ENCODE measurements at regions of chr17 and their contacts with region 1.

Region 1: GRCh38 chr17:8057691-8058114 is 18.8 kb downstream of the ALOX15B start:
- DNase-seq: peak; percentile 52 to 76 (median 62)
- ATAC-seq: peak; percentile 90
- H3K4me3 ChIP-seq: no peak overlapping the region
- H3K27ac ChIP-seq: no peak overlapping the region
- H3K4me1 ChIP-seq: no peaks in the 10 kb centered on the region; a peak in 2 of 5 replicates
- H3K27me3 ChIP-seq: 0 out of 5 replicates have a peak, but pooled peaks cover 0 to 3% of the 10 kb centered on the region in 2 experiments
- CTCF ChIP-seq: peak; percentile 75 to 80 (median 78)
- EP300 ChIP-seq: no peak
- POLR2A ChIP-seq: no peak
- RAD21 ChIP-seq: peak; percentile 72 to 82

Region 2: GRCh38 chr17:7740481-7741001 is 317.2 kb before region 1 on chr17:
- CTCF ChIA-PET with region 1: interaction called, 12 read pairs
- POLR2A ChIA-PET with region 1: no interaction called
- in situ Hi-C with region 1: no loop called
- intact Hi-C with region 1: loop called (anchors 1 kb)
- DNase-seq: no peak
- ATAC-seq: no peak
- H3K4me3 ChIP-seq: no peak overlapping the region
- H3K27ac ChIP-seq: no peak overlapping the region
- H3K4me1 ChIP-seq: peaks cover 0 to 4% of the 10 kb centered on the region in 2 experiments; a peak in 3 of 5 replicates
- H3K27me3 ChIP-seq: peaks cover 18 to 48% of the 10 kb centered on the region in 2 experiments; a peak in 4 of 5 replicates
- CTCF ChIP-seq: no peak
- EP300 ChIP-seq: no peak
- POLR2A ChIP-seq: no peak
- RAD21 ChIP-seq: no peak

Region 3: GRCh38 chr17:7915611-7916382 is 141.9 kb before region 1 on chr17 and contains the start of gene RNF227:
- CTCF ChIA-PET with region 1: interaction called, 13 read pairs
- POLR2A ChIA-PET with region 1: interaction called, 4 read pairs
- in situ Hi-C with region 1: loop called (anchors 5 kb)
- intact Hi-C with region 1: loop called (anchors 2 kb)
- DNase-seq: peak; percentile 72 to 92 (median 74)
- ATAC-seq: peak; percentile 87
- H3K4me3 ChIP-seq: peak within 1 kb of the TSS; percentile 46
- H3K27ac ChIP-seq: peak within 1 kb of the TSS; percentile 88
- H3K4me1 ChIP-seq: peaks cover 18 to 24% of the 10 kb centered on the region in 2 experiments; a peak in 4 of 5 replicates
- H3K27me3 ChIP-seq: no peaks in the 10 kb centered on the region
- CTCF ChIP-seq: no peak
- EP300 ChIP-seq: no peak
- POLR2A ChIP-seq: peak; percentile 70
- RAD21 ChIP-seq: no peak
- polyA plus RNA-seq, gene RNF227: 1.1 to 1.5 TPM

Region 4: DNA sequence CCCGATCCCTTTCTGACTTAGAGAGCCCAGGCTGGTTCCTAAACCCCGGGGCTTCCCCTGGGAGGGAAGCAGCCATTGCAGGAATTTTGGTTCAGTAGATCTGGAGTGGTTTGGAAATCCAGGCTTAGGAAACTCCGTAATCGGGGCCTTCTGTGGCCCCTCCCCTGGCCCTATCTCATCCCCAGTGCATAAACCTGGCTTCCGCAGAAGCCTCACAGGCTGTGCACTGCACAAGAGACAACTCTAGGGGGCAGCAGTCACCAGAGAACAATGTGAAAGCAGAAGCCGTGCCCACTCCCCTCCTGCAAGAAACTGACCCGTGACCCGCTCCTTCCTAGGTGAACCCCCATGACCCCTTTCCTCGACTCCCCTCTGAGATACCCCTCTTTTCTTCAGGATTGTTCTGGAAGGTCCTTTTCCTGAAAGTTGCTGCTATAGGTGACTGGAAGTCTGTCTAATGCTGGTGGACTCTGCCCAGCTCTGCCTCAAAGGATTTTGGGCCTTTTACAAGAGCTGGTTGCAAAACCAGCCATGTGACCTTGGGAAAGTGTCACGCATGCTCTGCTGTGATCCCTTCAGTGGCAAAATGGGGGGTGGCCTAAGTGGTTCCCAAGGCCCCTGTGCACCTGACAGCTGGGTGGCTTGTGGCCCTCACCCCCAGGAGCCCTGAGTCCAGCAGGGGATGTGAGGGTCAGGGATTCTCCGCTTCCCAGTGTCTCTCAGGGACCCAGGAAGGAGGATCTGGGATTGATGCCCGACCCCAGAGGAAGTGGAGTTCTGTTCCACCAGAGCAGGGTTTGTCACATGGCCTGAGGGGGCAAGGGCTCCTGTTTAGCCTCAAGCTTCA is 40.8 kb before region 1 on chr17:
- CTCF ChIA-PET with region 1: interaction called, 17 read pairs
- POLR2A ChIA-PET with region 1: no interaction called
- in situ Hi-C with region 1: no loop called
- intact Hi-C with region 1: loop called (anchors 1 kb)
- DNase-seq: peak; percentile 53 to 60 (median 57)
- ATAC-seq: peak; percentile 95
- H3K4me3 ChIP-seq: no peak overlapping the region
- H3K27ac ChIP-seq: no peak overlapping the region
- H3K4me1 ChIP-seq: peaks cover 0 to 13% of the 10 kb centered on the region in 2 experiments; a peak in 2 of 5 replicates
- H3K27me3 ChIP-seq: peaks cover 9 to 71% of the 10 kb centered on the region in 2 experiments; a peak in 4 of 5 replicates
- CTCF ChIP-seq: peak; percentile 64 to 82 (median 72)
- EP300 ChIP-seq: no peak
- POLR2A ChIP-seq: no peak
- RAD21 ChIP-seq: peak; percentile 47 to 71

Region 5: GRCh38 chr17:8118769-8119580 is 61.3 kb after region 1 on chr17:
- CTCF ChIA-PET with region 1: interaction called, 5 read pairs
- POLR2A ChIA-PET with region 1: no interaction called
- in situ Hi-C with region 1: no loop called
- intact Hi-C with region 1: loop called (anchors 2 kb)
- DNase-seq: peak; percentile 73 to 85 (median 76)
- ATAC-seq: peak; percentile 81
- H3K4me3 ChIP-seq: peak overlapping the region; percentile 65
- H3K27ac ChIP-seq: peak overlapping the region; percentile 63; the same call in 2 of the 3 replicates
- H3K4me1 ChIP-seq: peaks cover 20 to 43% of the 10 kb centered on the region in 2 experiments
- H3K27me3 ChIP-seq: peaks cover 14 to 41% of the 10 kb centered on the region in 2 experiments
- CTCF ChIP-seq: peak; percentile 77 to 89 (median 87)
- EP300 ChIP-seq: peak; percentile 32; the same call in 1 of the 2 replicates
- POLR2A ChIP-seq: no peak
- RAD21 ChIP-seq: peak; percentile 52 to 68

Region 6: GRCh38 chr17:8991514-8992285 is 934.0 kb after region 1 on chr17:
- CTCF ChIA-PET with region 1: no interaction called
- POLR2A ChIA-PET with region 1: no interaction called
- in situ Hi-C with region 1: loop called (anchors 25 kb)
- intact Hi-C with region 1: no loop called
- DNase-seq: peak; percentile 38 to 59 (median 46)
- ATAC-seq: peak; percentile 76
- H3K4me3 ChIP-seq: no peak overlapping the region
- H3K27ac ChIP-seq: no peak overlapping the region
- H3K4me1 ChIP-seq: no peaks in the 10 kb centered on the region
- H3K27me3 ChIP-seq: no peaks in the 10 kb centered on the region
- CTCF ChIP-seq: peak; percentile 68 to 85 (median 69)
- EP300 ChIP-seq: no peak
- POLR2A ChIP-seq: no peak
- RAD21 ChIP-seq: peak in 1 of 2 experiments; percentile 44; a peak in 2 of 4 replicates